Gastrocnemius medialis (tissue), 4 donors: ENCODE measurements at regions of chr11 and their contacts with region 1.

Region 1: DNA sequence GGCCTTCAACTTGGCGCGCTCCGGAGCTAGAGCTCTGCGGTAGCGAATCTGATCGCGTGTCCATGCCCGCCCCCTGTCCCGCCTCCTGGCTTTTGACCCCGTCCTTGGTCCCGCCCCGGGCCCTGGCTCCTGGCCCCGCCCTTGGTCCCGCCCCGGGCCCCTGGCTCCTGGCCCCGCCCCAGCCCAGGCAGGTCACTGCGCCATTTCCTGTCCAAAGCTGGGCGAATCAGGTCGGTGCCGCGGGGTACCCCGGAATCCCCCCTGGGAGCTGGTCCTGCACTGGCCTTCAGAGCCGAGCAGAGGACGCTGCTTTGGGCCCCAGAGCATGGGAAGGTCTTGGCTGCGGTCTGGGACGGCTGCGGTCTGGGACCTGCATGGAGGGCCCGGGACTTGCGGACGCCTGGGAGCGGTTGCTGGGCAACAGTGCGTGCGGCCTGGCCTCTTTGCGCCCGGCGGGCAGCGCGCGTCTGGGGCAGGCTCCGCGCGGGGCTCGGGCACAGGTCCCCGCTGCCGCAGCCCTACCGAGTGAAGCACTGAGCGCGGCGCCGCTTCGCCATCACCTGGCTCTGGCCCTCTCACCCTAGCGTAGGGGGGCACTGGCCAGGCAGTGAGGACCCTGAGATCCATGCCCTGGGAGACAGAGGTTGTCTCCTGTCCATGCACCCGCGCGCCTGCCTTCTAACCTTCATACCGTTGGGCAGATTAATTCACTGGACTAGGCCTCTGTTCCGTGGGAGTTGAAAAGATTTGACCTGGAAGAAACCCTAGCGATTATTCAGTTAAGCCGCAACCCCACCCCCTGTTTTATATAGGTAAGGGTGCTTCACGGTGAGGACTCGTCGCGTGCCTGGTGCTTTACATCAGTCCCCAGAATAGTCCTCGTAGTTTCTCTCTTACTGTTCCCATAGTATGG is at the start of gene TTC12:
- DNase-seq: peak; percentile 88 to 92
- ATAC-seq: peak; percentile 96 to 98
- H3K4me3 ChIP-seq: peak within 1 kb of the TSS; percentile 73 to 98 (median 84)
- H3K27ac ChIP-seq: peak within 1 kb of the TSS; percentile 78 to 94 (median 90)
- H3K4me1 ChIP-seq: peaks cover 8 to 18% of the 10 kb centered on the region in 2 donors
- H3K27me3 ChIP-seq: no peaks in the 10 kb centered on the region
- CTCF ChIP-seq: no peak
- POLR2A ChIP-seq: peak; percentile 27 to 42
- total RNA-seq, gene TTC12: 3.5 to 22.5 (median 5.2) TPM

Region 2: DNA sequence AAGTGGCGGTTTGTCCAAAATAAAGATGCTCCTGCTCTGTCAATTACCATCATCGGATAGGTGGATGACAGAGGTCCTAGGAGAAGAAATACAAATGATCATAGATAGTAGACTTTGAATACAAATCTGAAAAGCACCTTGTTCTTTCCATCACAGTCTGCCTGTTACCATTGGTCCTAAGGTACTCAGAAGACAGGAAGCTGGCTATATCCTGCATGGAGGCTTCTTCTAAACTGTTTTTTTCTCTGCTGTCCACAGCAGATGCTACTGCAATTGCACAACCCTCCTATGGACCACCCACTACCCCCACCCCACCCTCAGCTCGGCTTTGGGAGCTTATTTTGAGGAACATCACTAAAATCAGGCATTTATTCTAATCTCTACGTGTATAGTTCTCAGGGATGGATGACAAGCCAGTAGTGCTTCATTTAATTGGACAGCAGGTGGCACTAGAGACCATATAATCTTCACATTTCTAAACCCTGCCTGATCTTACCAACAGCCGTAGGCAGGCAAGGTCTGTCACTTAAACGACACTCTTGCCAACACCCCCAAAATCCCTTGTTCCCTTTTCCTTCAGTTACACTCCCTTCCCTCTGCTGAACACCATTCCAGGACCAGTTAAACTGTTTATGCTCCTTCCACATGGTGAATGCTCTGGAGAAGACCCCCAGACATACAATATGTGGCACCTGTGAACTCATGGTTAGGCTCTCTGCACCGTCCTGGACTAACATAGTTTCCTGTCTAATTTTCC is 1095.0 kb before region 1 on chr11:
- in situ Hi-C with region 1: no loop called
- intact Hi-C with region 1: loop called (anchors 10 kb)
- DNase-seq: peak; percentile 13 to 21
- ATAC-seq: peak; percentile 92 to 97
- H3K4me3 ChIP-seq: no peak overlapping the region
- H3K27ac ChIP-seq: no peak overlapping the region
- H3K4me1 ChIP-seq: no peaks in the 10 kb centered on the region
- H3K27me3 ChIP-seq: no peaks in the 10 kb centered on the region
- CTCF ChIP-seq: peak; percentile 83 to 86 (median 85)
- POLR2A ChIP-seq: no peak

Region 3: GRCh38 chr11:113721462-113722066 is 406.9 kb after region 1 on chr11:
- in situ Hi-C with region 1: no loop called
- intact Hi-C with region 1: loop called (anchors 2 kb)
- DNase-seq: peak; percentile 73 to 84
- ATAC-seq: peak; percentile 87 to 94
- H3K4me3 ChIP-seq: no peak overlapping the region
- H3K27ac ChIP-seq: peak overlapping the region in 3 of 4 donors; percentile 76 to 81 (median 81)
- H3K4me1 ChIP-seq: peaks cover 38 to 68% of the 10 kb centered on the region in 2 donors
- H3K27me3 ChIP-seq: no peaks in the 10 kb centered on the region
- CTCF ChIP-seq: no peak
- POLR2A ChIP-seq: no peak

Region 4: GRCh38 chr11:113773416-113774173 is 458.9 kb after region 1 on chr11 and contains the start of gene ZW10:
- in situ Hi-C with region 1: no loop called
- intact Hi-C with region 1: loop called (anchors 5 kb)
- DNase-seq: peak; percentile 95 to 97
- ATAC-seq: peak; percentile 83 to 88
- H3K4me3 ChIP-seq: peak within 1 kb of the TSS; percentile 81 to 100 (median 84)
- H3K27ac ChIP-seq: peak within 1 kb of the TSS; percentile 86 to 97 (median 90)
- H3K4me1 ChIP-seq: peaks cover 15 to 18% of the 10 kb centered on the region in 2 donors
- H3K27me3 ChIP-seq: no peaks in the 10 kb centered on the region
- CTCF ChIP-seq: peak; percentile 70 to 83 (median 82)
- POLR2A ChIP-seq: peak; percentile 51 to 69
- total RNA-seq, gene ZW10: 17.3 to 24.3 (median 20.2) TPM